Activated naive CD4-positive, alpha-beta T cell treated with anti-CD3 and anti-CD28 coated beads for 36 hours (primary cell): ENCODE measurements at regions of chrX and their contacts with region 1.

Region 1: GRCh38 chrX:77910108-77910840 is at the start of gene ATP7A:
- DNase-seq: peak; percentile 93
- H3K4me3 Mint-ChIP-seq: peak within 1 kb of the TSS; percentile 97
- H3K27ac Mint-ChIP-seq: peak within 1 kb of the TSS; percentile 96
- H3K4me1 Mint-ChIP-seq: peaks cover 12% of the 10 kb centered on the region
- H3K27me3 Mint-ChIP-seq: no peaks in the 10 kb centered on the region
- total RNA-seq, gene ATP7A: 5.3 to 5.5 TPM

Region 2: DNA sequence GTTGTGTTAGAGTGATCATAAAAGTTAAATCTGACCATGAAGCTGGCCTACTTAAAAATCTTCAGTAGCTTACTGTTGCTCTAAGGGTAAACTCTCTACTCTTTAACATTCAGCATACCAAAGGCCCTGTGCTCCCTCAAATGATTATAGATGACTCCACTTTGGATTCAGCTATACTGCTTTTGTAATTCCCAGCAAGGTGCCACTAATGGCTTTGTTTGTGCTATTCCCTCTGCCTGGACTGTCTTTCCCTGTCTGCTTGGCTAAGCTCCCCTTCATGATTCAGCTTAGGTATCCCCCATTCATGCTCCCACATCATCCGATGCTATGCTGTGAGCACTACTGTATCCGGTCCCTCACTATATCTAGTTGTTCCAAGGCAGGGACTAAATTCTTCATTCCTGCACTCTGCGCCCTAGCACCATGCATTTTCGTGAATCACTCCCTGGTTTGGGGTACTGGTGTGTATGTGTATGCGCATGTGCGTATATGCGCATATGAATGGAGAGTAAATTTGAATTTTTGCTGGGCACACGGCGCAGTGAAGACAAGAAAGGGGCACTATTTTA is 1737.9 kb before region 1 on chrX:
- CTCF ChIA-PET with region 1: no interaction called
- intact Hi-C with region 1: loop called (anchors 5 kb)
- DNase-seq: no peak
- H3K4me3 Mint-ChIP-seq: peak overlapping the region; percentile 92
- H3K27ac Mint-ChIP-seq: peak overlapping the region; percentile 93
- H3K4me1 Mint-ChIP-seq: peaks cover 53% of the 10 kb centered on the region
- H3K27me3 Mint-ChIP-seq: no peaks in the 10 kb centered on the region

Region 3: GRCh38 chrX:77628294-77629025 is 281.8 kb before region 1 on chrX:
- CTCF ChIA-PET with region 1: no interaction called
- intact Hi-C with region 1: no loop called
- DNase-seq: no peak
- H3K4me3 Mint-ChIP-seq: no peak overlapping the region
- H3K27ac Mint-ChIP-seq: no peak overlapping the region
- H3K4me1 Mint-ChIP-seq: peaks cover 3% of the 10 kb centered on the region
- H3K27me3 Mint-ChIP-seq: no peaks in the 10 kb centered on the region

Region 4: GRCh38 chrX:78024349-78025108 is 114.3 kb after region 1 on chrX:
- CTCF ChIA-PET with region 1: interaction called, 32 read pairs
- intact Hi-C with region 1: loop called (anchors 1 kb)
- DNase-seq: peak; percentile 8
- H3K4me3 Mint-ChIP-seq: no peak overlapping the region
- H3K27ac Mint-ChIP-seq: no peak overlapping the region
- H3K4me1 Mint-ChIP-seq: peaks cover 3% of the 10 kb centered on the region
- H3K27me3 Mint-ChIP-seq: no peaks in the 10 kb centered on the region

Region 5: GRCh38 chrX:78092296-78092695 is 182.0 kb after region 1 on chrX:
- CTCF ChIA-PET with region 1: no interaction called
- intact Hi-C with region 1: loop called (anchors 1 kb)
- DNase-seq: peak; percentile 24
- H3K4me3 Mint-ChIP-seq: no peak overlapping the region
- H3K27ac Mint-ChIP-seq: no peak overlapping the region
- H3K4me1 Mint-ChIP-seq: no peaks in the 10 kb centered on the region
- H3K27me3 Mint-ChIP-seq: no peaks in the 10 kb centered on the region

Region 6: DNA sequence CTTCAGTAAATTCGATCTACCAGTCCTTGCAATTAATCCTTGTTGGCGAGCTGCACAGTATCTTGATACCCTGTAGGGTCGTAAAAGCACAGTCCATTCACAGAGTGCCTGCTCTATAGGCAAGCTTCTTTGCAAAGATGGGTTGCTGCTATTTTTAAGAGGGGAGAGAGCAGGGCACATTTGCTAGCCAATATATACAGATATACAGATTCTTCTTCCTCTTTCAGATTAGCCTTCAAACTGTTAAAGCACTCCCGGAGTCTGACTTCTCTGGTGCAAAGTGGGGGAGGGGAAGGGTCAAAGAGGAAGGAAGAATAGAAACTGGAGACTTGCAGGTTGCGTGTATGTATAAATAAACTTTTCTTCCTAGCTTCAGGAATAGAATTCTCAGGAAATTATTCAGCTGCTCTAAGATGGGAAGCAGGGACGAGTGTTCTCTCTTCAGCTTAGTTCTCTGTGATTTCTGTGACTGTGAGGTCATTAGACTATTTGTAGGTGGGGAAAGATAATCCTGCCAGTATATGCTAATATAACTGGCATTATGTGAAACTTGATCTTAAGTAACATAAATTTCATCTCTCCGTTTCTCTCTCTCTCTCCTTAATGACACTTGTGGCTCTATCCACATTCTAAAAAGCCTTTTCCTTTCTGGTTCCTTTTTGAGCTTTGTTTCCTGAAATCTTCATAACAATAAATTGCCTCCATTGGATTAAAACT is 417.3 kb after region 1 on chrX and contains the start of gene CYSLTR1:
- CTCF ChIA-PET with region 1: no interaction called
- intact Hi-C with region 1: loop called (anchors 2 kb)
- DNase-seq: no peak
- H3K4me3 Mint-ChIP-seq: peak within 1 kb of the TSS; percentile 71
- H3K27ac Mint-ChIP-seq: peak within 1 kb of the TSS; percentile 85
- H3K4me1 Mint-ChIP-seq: peaks cover 58% of the 10 kb centered on the region
- H3K27me3 Mint-ChIP-seq: no peaks in the 10 kb centered on the region
- total RNA-seq, gene CYSLTR1: 2.1 to 2.2 TPM

Region 7: GRCh38 chrX:79412972-79413371 is 1502.7 kb after region 1 on chrX:
- CTCF ChIA-PET with region 1: no interaction called
- intact Hi-C with region 1: loop called (anchors 2 kb)
- DNase-seq: no peak
- H3K4me3 Mint-ChIP-seq: peak overlapping the region; percentile 66
- H3K27ac Mint-ChIP-seq: peak overlapping the region; percentile 69
- H3K4me1 Mint-ChIP-seq: peaks cover 21% of the 10 kb centered on the region
- H3K27me3 Mint-ChIP-seq: no peaks in the 10 kb centered on the region